Caki2 (cell line): ENCODE measurements at regions of chr20 and their contacts with region 1.

Region 1: DNA sequence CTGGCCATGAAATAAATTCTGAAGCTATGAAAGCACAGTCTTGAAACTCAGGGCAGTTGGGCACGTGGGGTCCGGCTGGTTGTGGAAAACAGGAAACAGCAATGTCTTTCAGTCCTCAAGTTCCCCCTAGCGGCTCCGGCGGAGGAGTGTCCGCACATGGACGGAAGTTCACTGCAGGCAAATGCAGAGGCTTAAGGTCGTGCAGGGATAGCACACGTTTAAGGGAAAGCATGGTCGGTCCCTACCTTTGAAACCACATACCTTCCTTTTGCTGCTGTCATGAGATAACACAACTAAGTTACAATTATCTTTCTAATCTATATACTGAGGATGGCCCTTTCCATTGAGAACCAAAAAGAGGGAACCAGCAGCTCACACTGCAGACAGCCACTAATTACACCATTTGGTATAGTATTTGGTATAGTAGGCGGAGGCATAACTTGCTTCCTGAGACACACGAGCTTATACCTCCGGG is 52.6 kb upstream of the NFATC2 start:
- DNase-seq: peak; percentile 70

Region 2: GRCh38 chr20:51385646-51386530 is 209.2 kb before region 1 on chr20:
- in situ Hi-C with region 1: loop called (anchors 10 kb)
- DNase-seq: peak; percentile 35

Region 3: DNA sequence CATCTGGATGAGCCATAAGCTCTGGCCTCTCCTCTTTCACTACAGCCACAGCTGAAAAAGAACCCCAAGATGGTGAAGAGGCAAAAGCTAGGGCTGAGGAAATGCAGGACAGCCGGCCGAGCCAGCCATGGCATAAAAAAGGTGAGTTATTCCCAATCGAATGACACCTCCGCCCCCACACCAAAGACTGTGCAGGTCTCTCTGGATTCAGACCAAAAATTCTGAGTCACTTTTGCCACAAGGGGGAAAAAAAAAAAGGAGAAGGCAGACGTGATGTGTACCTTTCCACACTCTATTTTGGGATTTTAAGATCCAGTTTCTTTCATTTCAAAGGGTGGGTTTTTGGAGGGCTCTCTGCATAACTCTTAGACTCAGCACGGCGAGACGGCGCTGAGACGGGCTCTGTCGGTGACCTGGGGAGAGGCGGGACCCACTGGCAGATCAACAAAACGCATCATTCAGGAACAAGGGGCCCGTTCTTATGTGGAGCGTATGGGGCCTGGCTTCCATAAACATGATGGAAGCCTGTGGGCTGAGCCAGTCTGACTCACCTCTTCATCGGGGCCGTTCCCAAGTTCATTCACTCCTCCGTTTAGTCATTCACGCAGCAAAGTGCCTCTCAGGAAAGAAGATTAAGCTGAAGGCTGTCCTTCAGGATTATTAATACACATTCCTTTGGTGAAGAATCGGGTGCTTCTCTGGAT is 107.4 kb before region 1 on chr20:
- in situ Hi-C with region 1: no loop called
- DNase-seq: peak; percentile 90

Region 4: GRCh38 chr20:51750037-51750763 is 155.1 kb after region 1 on chr20:
- in situ Hi-C with region 1: no loop called
- DNase-seq: peak; percentile 100